ENCODE measurements at regions of chr5 and their contacts with region 1.

Region 1: DNA sequence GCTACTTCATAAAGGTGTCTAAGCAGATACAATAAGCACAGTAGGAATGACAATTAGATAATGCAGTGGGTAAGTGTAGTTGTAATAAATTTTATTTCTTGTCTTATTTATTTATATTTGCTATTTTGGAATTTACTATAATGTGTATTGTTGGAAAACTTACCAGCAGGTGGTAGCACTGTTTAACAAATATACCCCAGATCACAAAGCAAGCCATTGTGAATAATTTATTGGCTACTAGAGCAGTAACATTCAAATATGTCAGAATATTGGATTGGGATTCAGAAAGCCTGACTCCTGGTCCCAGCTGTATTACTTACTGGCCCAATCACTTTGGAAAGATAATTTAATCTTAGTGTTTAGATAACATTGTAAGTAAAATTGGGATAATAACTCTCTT is 78.0 kb downstream of the ISOC1 start:
- DNase-seq: no peak
- ATAC-seq: no peak
- H3K4me3 Mint-ChIP-seq: no peak overlapping the region
- H3K27ac Mint-ChIP-seq: no peak overlapping the region
- H3K4me1 Mint-ChIP-seq: no peaks in the 10 kb centered on the region
- H3K27me3 Mint-ChIP-seq: no peaks in the 10 kb centered on the region

Region 2: DNA sequence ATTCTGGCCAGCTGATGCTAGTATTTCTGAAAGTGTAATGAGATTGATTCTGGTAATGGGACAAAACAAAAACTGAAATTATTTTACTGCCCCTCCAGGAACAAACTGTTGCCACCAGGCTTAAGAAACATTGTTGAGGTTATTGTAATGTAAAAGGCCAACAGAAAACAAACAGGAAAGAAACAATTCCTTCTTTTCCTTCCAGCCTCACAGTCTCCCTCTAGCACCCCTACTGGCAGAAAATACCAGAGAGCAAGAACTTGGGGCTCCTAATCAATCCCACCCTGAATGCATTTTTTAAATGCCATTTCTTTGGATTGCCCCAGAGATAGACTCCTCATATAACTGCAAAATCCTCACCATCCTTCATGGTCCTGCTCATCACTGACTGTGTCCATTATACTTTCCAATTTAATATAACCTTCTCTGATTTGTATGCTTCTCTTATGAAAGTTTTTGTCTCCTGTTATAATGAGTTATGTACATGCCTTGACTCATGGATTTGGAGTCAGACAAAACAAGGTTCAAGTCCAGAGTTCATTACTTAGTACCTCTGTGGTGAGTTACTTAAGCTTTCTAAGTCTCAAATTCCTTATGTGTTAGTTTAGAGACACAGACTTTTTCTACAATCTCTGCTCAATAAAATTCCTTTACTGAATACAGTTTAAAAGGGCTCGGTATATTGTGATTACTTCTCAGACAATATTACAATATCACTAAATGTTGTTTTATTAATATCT is 476.6 kb before region 1 on chr5:
- CTCF ChIA-PET with region 1: no interaction called
- POLR2A ChIA-PET with region 1: no interaction called
- intact Hi-C with region 1: no loop called
- DNase-seq: no peak
- ATAC-seq: no peak
- H3K4me3 Mint-ChIP-seq: no peak overlapping the region
- H3K27ac Mint-ChIP-seq: no peak overlapping the region
- H3K4me1 Mint-ChIP-seq: no peaks in the 10 kb centered on the region
- H3K27me3 Mint-ChIP-seq: no peaks in the 10 kb centered on the region

Region 3: GRCh38 chr5:129101803-129102202 is 70.8 kb before region 1 on chr5:
- CTCF ChIA-PET with region 1: no interaction called
- POLR2A ChIA-PET with region 1: no interaction called
- intact Hi-C with region 1: loop called in 1 of 2 experiments (anchors 2 kb)
- DNase-seq: no peak
- ATAC-seq: no peak
- H3K4me3 Mint-ChIP-seq: no peak overlapping the region
- H3K27ac Mint-ChIP-seq: no peak overlapping the region
- H3K4me1 Mint-ChIP-seq: peaks cover 16% of the 10 kb centered on the region
- H3K27me3 Mint-ChIP-seq: no peaks in the 10 kb centered on the region

Region 4: GRCh38 chr5:129204525-129204924 is 31.9 kb after region 1 on chr5:
- CTCF ChIA-PET with region 1: no interaction called
- POLR2A ChIA-PET with region 1: no interaction called
- intact Hi-C with region 1: no loop called
- DNase-seq: no peak
- ATAC-seq: no peak
- H3K4me3 Mint-ChIP-seq: no peak overlapping the region
- H3K27ac Mint-ChIP-seq: no peak overlapping the region
- H3K4me1 Mint-ChIP-seq: no peaks in the 10 kb centered on the region
- H3K27me3 Mint-ChIP-seq: no peaks in the 10 kb centered on the region